Left cardiac atrium (tissue), 4 donors: ENCODE measurements at regions of chr2 and their contacts with region 1.

Region 1: DNA sequence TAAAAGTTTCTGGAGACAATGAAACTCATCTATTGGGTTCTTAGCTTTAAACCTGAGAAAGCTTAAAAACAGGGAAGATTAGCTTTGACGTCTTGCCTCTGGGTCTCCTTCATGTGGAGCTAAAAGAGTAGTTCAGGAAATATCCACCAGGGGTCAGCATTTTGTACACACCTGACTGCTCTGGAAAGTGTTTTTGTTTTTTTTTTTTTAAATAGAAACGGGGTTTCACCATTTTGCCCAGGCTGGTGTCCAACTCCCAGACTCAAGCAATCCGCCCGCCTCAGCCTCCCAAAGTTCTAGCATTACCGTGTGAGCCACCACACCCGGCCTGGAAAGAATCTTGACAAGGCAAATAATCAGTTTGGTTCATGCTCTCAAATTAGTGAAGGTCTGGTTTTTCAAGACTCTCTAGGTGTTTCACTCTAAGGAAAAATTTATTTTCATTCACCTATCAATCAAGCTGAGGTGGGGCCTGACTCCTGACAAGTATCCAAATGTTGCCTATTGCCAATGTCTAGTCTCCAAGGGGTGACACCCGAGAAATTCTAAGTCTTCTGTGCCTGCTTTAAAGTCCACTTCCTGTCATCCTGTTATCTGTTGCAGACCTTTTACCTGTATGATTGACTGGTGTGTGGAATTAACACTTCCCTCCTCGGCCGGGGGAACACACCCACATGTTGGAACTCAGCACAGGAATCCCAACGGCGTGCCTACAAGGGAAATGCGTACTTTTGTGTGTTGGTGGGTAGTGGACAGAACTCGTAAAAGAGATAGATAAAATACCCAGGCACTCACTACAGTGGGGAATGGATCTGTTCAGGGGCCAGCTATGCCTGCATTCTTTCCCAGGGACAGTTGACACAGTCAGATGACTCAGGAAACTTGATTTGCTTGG is 11.3 kb downstream of the IL1RN start:
- DNase-seq: no peak
- ATAC-seq: peak; percentile 79 to 80

Region 2: GRCh38 chr2:112768432-112768831 is 370.2 kb before region 1 on chr2:
- intact Hi-C with region 1: no loop called
- DNase-seq: no peak
- ATAC-seq: no peak

Region 3: GRCh38 chr2:112841295-112842044 is 297.2 kb before region 1 on chr2:
- intact Hi-C with region 1: no loop called
- DNase-seq: no peak
- ATAC-seq: peak; percentile 5 to 28

Region 4: GRCh38 chr2:113198790-113199612 is 60.3 kb after region 1 on chr2:
- intact Hi-C with region 1: loop called (anchors 2 to 5 kb)
- DNase-seq: peak; percentile 83
- ATAC-seq: peak; percentile 91 to 93

Region 5: GRCh38 chr2:113370478-113371091 is 231.9 kb after region 1 on chr2:
- intact Hi-C with region 1: loop called (anchors 2 to 5 kb)
- DNase-seq: peak; percentile 61
- ATAC-seq: peak; percentile 92 to 94

Region 6: GRCh38 chr2:113390124-113390849 is 251.6 kb after region 1 on chr2:
- intact Hi-C with region 1: no loop called
- DNase-seq: peak; percentile 31
- ATAC-seq: peak; percentile 76 to 83